ENCODE measurements at regions of chr2 and their contacts with region 1.

Region 1: DNA sequence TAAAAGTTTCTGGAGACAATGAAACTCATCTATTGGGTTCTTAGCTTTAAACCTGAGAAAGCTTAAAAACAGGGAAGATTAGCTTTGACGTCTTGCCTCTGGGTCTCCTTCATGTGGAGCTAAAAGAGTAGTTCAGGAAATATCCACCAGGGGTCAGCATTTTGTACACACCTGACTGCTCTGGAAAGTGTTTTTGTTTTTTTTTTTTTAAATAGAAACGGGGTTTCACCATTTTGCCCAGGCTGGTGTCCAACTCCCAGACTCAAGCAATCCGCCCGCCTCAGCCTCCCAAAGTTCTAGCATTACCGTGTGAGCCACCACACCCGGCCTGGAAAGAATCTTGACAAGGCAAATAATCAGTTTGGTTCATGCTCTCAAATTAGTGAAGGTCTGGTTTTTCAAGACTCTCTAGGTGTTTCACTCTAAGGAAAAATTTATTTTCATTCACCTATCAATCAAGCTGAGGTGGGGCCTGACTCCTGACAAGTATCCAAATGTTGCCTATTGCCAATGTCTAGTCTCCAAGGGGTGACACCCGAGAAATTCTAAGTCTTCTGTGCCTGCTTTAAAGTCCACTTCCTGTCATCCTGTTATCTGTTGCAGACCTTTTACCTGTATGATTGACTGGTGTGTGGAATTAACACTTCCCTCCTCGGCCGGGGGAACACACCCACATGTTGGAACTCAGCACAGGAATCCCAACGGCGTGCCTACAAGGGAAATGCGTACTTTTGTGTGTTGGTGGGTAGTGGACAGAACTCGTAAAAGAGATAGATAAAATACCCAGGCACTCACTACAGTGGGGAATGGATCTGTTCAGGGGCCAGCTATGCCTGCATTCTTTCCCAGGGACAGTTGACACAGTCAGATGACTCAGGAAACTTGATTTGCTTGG is 11.3 kb downstream of the IL1RN start:
- DNase-seq: peak in 10 of 14 experiments; percentile 13 to 91 (median 47)
- ATAC-seq: peak; percentile 86
- H3K4me3 ChIP-seq: no peak overlapping the region
- H3K4me3 Mint-ChIP-seq: peak overlapping the region; percentile 59
- H3K27ac ChIP-seq: no peak overlapping the region
- H3K27ac Mint-ChIP-seq: peak overlapping the region; percentile 62
- H3K4me1 ChIP-seq: peaks cover 10% of the 10 kb centered on the region
- H3K4me1 Mint-ChIP-seq: peaks cover 23% of the 10 kb centered on the region
- H3K27me3 ChIP-seq: no peaks in the 10 kb centered on the region
- H3K27me3 Mint-ChIP-seq: no peaks in the 10 kb centered on the region
- CTCF ChIP-seq: peak; percentile 95

Region 2: DNA sequence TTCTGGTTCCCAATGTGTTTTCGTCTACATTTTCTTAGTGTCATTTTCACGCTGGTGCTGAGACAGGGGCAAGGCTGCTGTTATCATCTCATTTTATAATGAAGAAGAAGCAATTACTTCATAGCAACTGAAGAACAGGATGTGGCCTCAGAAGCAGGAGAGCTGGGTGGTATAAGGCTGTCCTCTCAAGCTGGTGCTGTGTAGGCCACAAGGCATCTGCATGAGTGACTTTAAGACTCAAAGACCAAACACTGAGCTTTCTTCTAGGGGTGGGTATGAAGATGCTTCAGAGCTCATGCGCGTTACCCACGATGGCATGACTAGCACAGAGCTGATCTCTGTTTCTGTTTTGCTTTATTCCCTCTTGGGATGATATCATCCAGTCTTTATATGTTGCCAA is 153.6 kb before region 1 on chr2:
- CTCF ChIA-PET with region 1: no interaction called
- POLR2A ChIA-PET with region 1: no interaction called
- intact Hi-C with region 1: loop called in 1 of 2 experiments (anchors 10 kb)
- DNase-seq: peak in 12 of 14 experiments; percentile 3 to 56 (median 26)
- ATAC-seq: peak; percentile 94
- H3K4me3 ChIP-seq: no peak overlapping the region
- H3K4me3 Mint-ChIP-seq: peak overlapping the region; percentile 39
- H3K27ac ChIP-seq: peak overlapping the region in 1 of 2 donors; percentile 11
- H3K27ac Mint-ChIP-seq: peak overlapping the region; percentile 80
- H3K4me1 ChIP-seq: peaks cover 18% of the 10 kb centered on the region
- H3K4me1 Mint-ChIP-seq: peaks cover 30% of the 10 kb centered on the region
- H3K27me3 ChIP-seq: no peaks in the 10 kb centered on the region
- H3K27me3 Mint-ChIP-seq: no peaks in the 10 kb centered on the region
- CTCF ChIP-seq: peak; percentile 7

Region 3: DNA sequence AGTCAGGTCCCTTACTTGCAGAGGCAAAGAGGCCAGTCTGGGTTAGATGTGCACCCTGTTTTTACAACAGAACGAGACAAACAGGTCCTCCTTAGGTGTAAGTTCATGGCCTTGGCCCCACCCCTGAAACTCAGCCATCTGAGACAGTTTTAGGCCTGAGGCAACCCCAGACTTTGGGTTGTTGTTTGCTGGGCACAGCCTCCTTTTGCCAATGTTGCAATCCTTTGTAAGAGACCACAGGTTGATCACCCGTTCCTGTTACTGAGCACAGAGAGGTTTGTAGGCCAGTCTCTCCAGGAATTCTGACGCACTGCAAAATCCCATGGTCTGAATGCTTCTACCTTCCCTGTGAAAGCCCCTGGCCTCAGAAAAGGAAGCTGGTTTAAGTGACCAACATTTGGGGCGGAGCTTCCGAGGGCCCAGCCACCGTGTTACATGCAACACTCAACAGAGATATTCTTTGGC is 26.8 kb before region 1 on chr2:
- CTCF ChIA-PET with region 1: no interaction called
- POLR2A ChIA-PET with region 1: no interaction called
- intact Hi-C with region 1: no loop called
- DNase-seq: peak in 2 of 14 experiments; percentile 61 to 71
- ATAC-seq: no peak
- H3K4me3 ChIP-seq: no peak overlapping the region
- H3K4me3 Mint-ChIP-seq: no peak overlapping the region
- H3K27ac ChIP-seq: no peak overlapping the region
- H3K27ac Mint-ChIP-seq: no peak overlapping the region
- H3K4me1 ChIP-seq: peaks cover 18% of the 10 kb centered on the region
- H3K4me1 Mint-ChIP-seq: no peaks in the 10 kb centered on the region
- H3K27me3 ChIP-seq: no peaks in the 10 kb centered on the region
- H3K27me3 Mint-ChIP-seq: peaks cover 3% of the 10 kb centered on the region
- CTCF ChIP-seq: no peak

Region 4: GRCh38 chr2:113167115-113167932 is 28.6 kb after region 1 on chr2:
- CTCF ChIA-PET with region 1: interaction called, 17 read pairs
- POLR2A ChIA-PET with region 1: interaction called, 4 read pairs
- intact Hi-C with region 1: no loop called
- DNase-seq: peak in 8 of 14 experiments; percentile 36 to 70 (median 59)
- ATAC-seq: peak; percentile 67
- H3K4me3 ChIP-seq: peak overlapping the region; percentile 17
- H3K4me3 Mint-ChIP-seq: peak overlapping the region; percentile 74
- H3K27ac ChIP-seq: peak overlapping the region; percentile 74 to 85
- H3K27ac Mint-ChIP-seq: peak overlapping the region; percentile 90
- H3K4me1 ChIP-seq: peaks cover 73% of the 10 kb centered on the region
- H3K4me1 Mint-ChIP-seq: peaks cover 73% of the 10 kb centered on the region
- H3K27me3 ChIP-seq: no peaks in the 10 kb centered on the region
- H3K27me3 Mint-ChIP-seq: no peaks in the 10 kb centered on the region
- CTCF ChIP-seq: no peak

Region 5: DNA sequence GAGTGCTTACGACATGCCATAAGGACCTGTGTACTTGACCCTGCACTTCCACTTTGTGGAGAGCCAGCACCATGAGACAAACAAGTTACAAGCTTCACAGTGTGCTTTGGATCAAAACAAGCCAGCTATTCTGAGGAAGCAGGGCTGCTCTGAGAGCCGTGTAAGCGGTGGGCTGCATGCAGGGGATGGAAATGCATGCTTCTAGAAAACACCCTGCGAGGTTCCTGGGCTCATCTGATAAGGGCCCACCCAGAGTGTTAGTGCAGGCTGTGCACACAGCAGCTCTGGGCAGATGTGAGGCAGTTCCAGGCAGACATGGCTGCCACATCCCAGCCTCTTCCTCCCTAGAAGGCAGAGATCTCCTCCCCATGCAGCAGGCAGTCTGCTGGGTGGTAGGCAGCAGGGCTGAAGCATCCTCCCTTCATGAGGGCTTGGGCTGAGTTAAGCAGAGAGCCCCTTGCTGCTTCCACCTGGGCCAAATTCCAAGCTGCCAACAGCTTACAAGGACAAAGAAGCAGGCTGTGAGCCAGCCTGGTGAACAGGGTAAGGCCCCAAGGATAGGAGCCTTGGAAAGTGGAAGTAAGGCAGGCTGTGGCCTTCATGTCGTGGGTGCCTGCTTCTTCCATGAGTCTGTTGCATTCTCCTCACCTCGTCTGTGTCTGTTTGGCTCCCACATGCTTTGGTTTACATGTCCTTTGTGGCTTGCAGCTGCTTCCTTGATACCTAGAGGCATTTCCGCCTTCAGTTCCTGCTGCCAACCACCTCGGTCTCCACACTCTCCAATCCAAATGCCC is 42.8 kb after region 1 on chr2:
- CTCF ChIA-PET with region 1: interaction called, 39 read pairs
- POLR2A ChIA-PET with region 1: interaction called, 34 read pairs
- intact Hi-C with region 1: loop called (anchors 1 to 2 kb)
- DNase-seq: peak in 4 of 14 experiments; percentile 41 to 50 (median 42)
- ATAC-seq: peak; percentile 51
- H3K4me3 ChIP-seq: peak overlapping the region; percentile 26
- H3K4me3 Mint-ChIP-seq: peak overlapping the region; percentile 71
- H3K27ac ChIP-seq: peak overlapping the region; percentile 32 to 45
- H3K27ac Mint-ChIP-seq: peak overlapping the region; percentile 93
- H3K4me1 ChIP-seq: peaks cover 100% of the 10 kb centered on the region
- H3K4me1 Mint-ChIP-seq: peaks cover 93% of the 10 kb centered on the region
- H3K27me3 ChIP-seq: no peaks in the 10 kb centered on the region
- H3K27me3 Mint-ChIP-seq: no peaks in the 10 kb centered on the region
- CTCF ChIP-seq: no peak

Region 6: DNA sequence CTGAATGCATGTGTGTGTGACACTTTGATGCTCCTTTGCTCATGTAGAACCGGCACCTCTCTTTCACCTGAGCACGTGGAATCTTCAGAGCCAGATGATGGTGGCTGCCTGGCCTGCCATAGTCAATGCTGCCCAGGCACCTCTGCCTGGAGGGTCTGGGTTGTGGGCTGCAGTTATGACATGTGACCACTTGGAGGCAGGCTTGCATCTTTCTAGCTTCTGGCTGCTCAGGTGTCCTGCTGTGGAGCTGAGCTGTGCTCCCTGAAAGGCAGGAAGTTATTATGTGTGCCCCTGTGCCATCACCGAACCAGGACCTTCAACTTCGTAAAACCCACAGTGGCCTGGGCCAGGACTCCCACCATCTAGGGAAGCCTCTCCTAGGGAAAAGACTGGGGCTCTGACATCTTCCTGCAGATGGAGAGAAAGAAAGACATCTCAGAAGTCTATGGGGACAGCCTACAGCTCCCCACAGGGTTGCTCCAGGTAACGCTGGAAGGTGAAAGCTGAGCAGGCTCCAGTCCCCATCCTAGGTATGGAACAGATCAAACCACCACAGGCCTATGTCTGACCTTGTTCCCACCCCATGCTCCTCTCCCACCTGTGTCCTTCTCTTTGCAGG is 65.3 kb after region 1 on chr2:
- CTCF ChIA-PET with region 1: interaction called, 41 read pairs
- POLR2A ChIA-PET with region 1: interaction called, 14 read pairs
- intact Hi-C with region 1: loop called (anchors 1 kb)
- DNase-seq: peak; percentile 66 to 88 (median 71)
- ATAC-seq: peak; percentile 96
- H3K4me3 ChIP-seq: no peak overlapping the region
- H3K4me3 Mint-ChIP-seq: no peak overlapping the region
- H3K27ac ChIP-seq: peak overlapping the region; percentile 17 to 40
- H3K27ac Mint-ChIP-seq: peak overlapping the region; percentile 83
- H3K4me1 ChIP-seq: peaks cover 21% of the 10 kb centered on the region
- H3K4me1 Mint-ChIP-seq: peaks cover 38% of the 10 kb centered on the region
- H3K27me3 ChIP-seq: no peaks in the 10 kb centered on the region
- H3K27me3 Mint-ChIP-seq: no peaks in the 10 kb centered on the region
- CTCF ChIP-seq: peak; percentile 85

Region 7: DNA sequence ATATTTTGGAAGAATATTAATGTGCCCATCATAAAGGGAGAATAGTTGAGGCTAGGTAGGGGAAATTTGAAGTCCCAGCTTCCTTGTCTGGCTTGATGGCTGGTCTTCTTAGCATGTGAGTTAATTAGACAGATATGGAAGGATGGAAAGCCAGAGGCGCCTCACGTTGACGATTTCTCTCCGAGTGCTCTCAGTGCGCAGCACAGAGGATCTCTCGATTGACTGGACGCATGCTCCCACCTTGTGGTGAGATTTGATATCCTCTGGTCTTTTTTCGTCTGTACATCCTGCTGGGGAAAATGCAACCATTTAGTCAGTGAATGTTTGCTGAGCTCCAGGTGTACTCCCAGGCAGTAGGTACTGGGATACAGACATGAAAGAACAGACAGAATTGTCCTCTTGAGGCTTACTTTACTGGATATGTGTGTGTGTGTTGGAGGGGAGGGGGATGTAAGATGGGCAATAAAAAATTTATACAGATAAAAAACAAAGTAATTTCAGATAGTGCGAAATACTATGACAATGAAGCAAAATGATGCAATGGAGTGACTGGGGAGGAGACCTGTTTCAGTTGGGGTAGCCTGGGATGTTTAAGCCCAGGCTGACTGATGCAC is 231.9 kb after region 1 on chr2:
- CTCF ChIA-PET with region 1: interaction called, 7 read pairs
- POLR2A ChIA-PET with region 1: no interaction called
- intact Hi-C with region 1: loop called (anchors 1 to 2 kb)
- DNase-seq: peak; percentile 49 to 85 (median 58)
- ATAC-seq: peak; percentile 100
- H3K4me3 ChIP-seq: no peak overlapping the region
- H3K4me3 Mint-ChIP-seq: no peak overlapping the region
- H3K27ac ChIP-seq: no peak overlapping the region
- H3K27ac Mint-ChIP-seq: no peak overlapping the region
- H3K4me1 ChIP-seq: no peaks in the 10 kb centered on the region
- H3K4me1 Mint-ChIP-seq: peaks cover 5% of the 10 kb centered on the region
- H3K27me3 ChIP-seq: no peaks in the 10 kb centered on the region
- H3K27me3 Mint-ChIP-seq: no peaks in the 10 kb centered on the region
- CTCF ChIP-seq: peak; percentile 65